ENCODE measurements at regions of chr6 and their contacts with region 1.

Region 1: DNA sequence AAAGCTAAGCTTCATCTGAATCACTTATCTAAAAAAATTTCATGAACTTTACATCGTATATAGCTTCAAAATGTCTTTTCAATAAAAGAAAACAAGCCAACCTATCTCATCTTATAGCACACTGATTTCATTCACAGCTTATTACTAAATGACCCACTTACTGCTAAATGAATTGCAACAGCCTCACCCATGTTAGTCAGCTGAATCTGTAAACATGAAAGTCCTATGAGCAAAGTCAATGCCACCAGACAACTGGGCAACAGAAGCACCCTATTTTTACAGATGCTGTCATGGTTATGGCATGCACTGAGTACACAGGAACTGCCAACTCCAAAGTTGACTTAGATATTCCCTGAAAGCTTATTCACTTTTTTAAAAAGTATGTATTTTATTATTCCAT is 41.2 kb upstream of the DST start:
- DNase-seq: no peak
- ATAC-seq: peak; percentile 86
- H3K4me3 ChIP-seq: no peak overlapping the region
- H3K27ac ChIP-seq: peak overlapping the region in 1 of 2 donors; percentile 77
- H3K4me1 ChIP-seq: peaks cover 7 to 8% of the 10 kb centered on the region in 2 donors
- H3K27me3 ChIP-seq: no peaks in the 10 kb centered on the region

Region 2: GRCh38 chr6:56637640-56638039 is 46.2 kb before region 1 on chr6:
- intact Hi-C with region 1: no loop called
- DNase-seq: no peak
- ATAC-seq: peak; percentile 83
- H3K4me3 ChIP-seq: no peak overlapping the region
- H3K27ac ChIP-seq: no peak overlapping the region
- H3K4me1 ChIP-seq: no peaks in the 10 kb centered on the region
- H3K27me3 ChIP-seq: no peaks in the 10 kb centered on the region

Region 3: DNA sequence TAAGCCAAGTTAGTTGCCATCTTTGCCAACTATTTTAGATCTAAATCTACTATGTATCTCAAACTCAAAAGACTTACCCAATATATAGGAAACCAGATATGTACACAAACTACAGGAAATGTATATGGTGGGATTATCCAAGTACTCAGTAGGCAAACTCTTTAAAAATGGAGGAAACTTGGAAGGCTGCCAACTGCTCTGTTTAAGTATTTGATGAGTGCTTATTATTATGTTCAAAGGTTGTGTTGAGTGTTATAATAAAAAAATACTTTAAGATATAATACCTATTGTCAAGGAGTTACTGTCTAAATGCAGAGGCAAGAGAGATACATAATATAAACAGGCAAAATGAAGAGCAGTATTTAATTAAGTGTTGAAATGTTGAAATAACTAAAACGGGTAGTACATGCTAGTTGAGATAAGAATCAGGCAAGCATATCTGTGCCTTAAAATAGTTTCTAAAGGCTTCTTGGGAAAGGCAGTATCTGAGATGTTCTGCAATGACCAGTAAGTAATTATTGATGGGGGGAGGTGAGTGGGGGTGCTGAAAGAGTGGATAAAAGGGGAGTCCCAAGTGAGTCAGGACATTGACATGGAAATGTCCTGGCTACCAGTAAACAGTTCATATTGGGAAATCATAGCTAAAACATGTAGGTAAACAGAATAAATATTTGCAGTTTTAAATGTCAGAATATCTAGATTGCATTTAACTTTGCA is 34.7 kb before region 1 on chr6:
- intact Hi-C with region 1: loop called in 1 of 2 experiments (anchors 5 kb)
- DNase-seq: no peak
- ATAC-seq: no peak
- H3K4me3 ChIP-seq: no peak overlapping the region
- H3K27ac ChIP-seq: no peak overlapping the region
- H3K4me1 ChIP-seq: peaks cover 2 to 3% of the 10 kb centered on the region in 2 donors
- H3K27me3 ChIP-seq: no peaks in the 10 kb centered on the region

Measured in aorta (tissue), 5 donors.